Lower leg skin (tissue), 4 donors: ENCODE measurements at regions of chr16 and their contacts with region 1.

Region 1: GRCh38 chr16:1408171-1408837 is 6.2 kb downstream of the UNKL start:
- DNase-seq: peak; percentile 91 to 99
- H3K4me3 ChIP-seq: no peak overlapping the region
- CTCF ChIP-seq: no peak
- POLR2A ChIP-seq: no peak

Region 2: DNA sequence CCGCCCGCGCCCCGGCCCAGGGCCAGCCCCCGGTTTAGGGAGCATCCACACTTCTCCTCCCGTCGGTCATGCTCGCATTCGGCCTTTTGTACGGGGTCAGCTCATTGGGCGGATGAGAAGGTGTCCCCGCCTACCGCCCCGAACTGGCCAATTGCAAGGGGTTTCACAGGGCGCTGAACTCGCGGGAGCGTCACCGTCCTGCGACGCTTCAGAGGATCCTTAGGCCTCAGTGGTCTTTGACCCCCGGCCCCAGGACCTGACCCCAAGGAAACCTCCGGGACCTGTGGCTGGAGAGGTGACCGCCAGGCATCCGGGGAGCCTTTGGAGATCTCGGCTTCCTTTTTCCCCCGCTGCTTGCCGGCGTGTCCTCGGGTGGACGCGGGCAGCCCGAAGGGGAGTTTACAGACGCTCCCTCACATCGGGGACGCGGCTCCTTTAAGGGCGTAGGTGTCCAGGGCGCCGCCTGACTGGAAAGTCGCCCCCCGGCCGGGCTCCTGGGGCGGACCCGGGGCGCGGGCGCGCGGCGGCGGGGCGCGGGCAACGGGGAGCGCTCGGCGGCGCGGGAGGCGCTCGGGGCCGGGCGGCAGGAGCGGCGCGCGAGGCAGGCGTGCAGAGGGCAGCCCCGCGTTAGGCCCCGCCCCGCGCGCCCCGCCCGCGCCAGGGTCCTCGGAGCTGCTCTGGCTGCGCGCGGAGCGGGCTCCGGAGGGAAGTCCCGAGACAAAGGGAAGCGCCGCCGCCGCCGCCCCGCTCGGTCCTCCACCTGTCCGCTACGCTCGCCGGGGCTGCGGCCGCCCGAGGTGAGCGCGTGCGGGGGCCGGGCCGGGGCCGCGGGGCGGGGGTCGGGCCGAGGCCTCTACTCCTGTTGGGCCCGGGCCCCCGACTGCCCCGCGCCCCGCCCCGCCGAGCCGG is 99.1 kb before region 1 on chr16 and contains the start of gene UBE2I:
- intact Hi-C with region 1: no loop called
- DNase-seq: peak; percentile 96 to 99
- H3K4me3 ChIP-seq: peak within 1 kb of the TSS; percentile 25
- CTCF ChIP-seq: no peak
- POLR2A ChIP-seq: peak in 1 of 2 donors; percentile 22
- total RNA-seq, gene UBE2I: 42.1 to 138 (median 47.4) TPM

Region 3: DNA sequence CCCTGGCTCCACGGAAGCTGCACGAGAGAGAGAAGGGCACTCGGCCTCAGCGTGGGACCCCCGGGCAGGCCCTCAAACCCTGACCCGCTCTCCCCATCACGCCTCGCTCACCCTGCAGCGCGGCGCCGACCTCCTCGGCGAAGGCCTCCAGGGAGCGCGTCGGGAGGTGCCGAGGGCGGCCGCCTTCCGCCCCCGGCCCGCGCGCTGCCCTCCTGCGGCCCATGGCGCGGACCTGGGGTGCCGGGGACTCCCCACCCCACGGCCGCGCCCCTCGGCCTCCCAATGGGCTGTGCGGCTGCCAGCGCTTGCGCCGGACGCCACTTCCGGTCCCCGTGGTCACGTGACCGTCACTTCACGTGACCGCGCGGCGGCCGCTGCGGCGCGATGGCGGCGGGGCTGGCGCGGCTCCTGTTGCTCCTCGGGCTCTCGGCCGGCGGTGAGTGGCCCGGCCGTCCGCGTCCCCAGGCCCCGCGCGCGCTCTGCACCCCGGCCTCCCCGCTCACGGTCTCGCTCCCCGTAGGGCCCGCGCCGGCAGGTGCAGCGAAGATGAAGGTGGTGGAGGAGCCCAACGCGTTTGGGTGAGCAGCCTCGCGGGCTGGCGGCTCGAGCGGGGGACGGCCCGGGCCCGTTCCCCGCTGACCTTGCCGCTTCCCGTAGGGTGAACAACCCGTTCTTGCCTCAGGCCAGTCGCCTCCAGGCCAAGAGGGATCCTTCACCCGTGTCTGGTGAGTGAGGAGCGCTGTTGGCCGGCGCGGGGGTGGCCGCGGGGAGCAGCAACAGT is 56.5 kb before region 1 on chr16 and contains the starts of genes GNPTG and TSR3:
- intact Hi-C with region 1: loop called (anchors 10 kb)
- DNase-seq: peak; percentile 73 to 96
- H3K4me3 ChIP-seq: peak within 1 kb of the TSS; percentile 81
- CTCF ChIP-seq: no peak
- POLR2A ChIP-seq: no peak
- total RNA-seq, gene GNPTG: 46.5 to 65.7 (median 60.0) TPM
- total RNA-seq, gene TSR3: 76.8 to 106 (median 90.5) TPM

Region 4: GRCh38 chr16:1492923-1493745 is 84.8 kb after region 1 on chr16 and contains the start of gene TELO2:
- intact Hi-C with region 1: no loop called
- DNase-seq: peak; percentile 51 to 94
- H3K4me3 ChIP-seq: peak within 1 kb of the TSS; percentile 54
- CTCF ChIP-seq: no peak
- POLR2A ChIP-seq: no peak
- total RNA-seq, gene TELO2: 23.1 to 40.0 (median 34.1) TPM